Activated CD4-positive, alpha-beta memory T cell treated with anti-CD3 and anti-CD28 coated beads, Interleukin-2, amount 10 ng/mL, durations not matched to agents 7 days and 5 days (primary cell): ENCODE measurements at regions of chr5 and their contacts with region 1.

Region 1: DNA sequence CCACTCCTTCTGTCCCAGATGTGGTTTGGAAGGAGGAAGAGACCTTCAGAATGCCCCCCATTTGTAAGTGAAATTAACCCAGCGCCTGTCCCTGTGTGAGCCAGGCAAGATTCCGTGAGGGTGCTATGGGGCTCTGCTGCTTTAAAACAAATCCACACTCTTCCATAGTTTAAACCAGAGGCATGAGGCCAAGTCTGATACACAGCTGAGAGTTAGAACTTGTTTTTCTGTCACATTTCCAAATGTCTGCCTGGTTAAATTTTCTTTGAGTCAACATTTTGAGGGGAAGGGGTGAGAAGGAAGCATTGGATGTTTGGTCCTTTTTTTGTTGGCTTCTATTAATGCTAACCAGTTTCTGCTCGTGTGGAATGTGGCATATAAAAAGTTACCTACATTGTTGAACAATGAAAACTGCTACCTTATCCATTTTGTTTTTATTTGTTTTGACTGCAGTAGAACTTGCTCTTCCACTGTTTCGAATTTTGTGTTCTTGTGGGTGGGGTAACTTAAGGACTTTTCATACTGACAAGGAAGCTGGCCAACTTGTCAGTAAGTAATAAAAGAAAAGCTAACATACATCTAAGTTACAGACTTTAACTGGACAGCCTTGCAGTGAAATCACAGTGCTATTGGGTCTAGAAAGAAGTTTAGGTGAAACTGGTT is 12.9 kb downstream of the RGMB start:
- DNase-seq: no peak
- H3K4me3 Mint-ChIP-seq: no peak overlapping the region
- H3K27ac Mint-ChIP-seq: no peak overlapping the region
- H3K4me1 Mint-ChIP-seq: no peaks in the 10 kb centered on the region
- H3K27me3 Mint-ChIP-seq: no peaks in the 10 kb centered on the region

Region 2: DNA sequence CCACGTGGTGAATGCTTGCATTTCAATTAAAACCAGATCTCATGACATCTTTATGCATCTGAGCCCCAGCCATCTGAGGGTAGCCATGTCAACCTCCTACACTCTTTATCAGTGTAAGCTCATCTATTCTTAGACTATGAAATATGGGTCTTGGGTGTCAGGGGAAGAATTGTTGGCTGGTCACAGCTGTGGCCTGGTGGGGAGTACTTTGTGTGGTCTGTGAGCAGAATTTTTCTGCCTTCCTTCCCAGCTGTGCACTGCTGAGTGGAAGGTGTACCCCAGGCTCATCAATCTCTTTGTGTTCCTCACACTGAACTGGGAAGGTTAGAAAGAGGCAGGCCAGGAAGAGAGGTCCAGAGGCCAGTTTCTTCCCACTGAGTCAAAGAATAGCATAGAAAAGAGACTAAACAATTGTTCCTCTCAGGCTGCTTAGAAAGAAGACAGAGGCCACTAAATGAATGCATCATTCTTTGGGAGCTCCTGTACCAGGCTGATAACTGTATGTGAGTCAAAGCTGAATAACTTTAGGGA is 215.6 kb before region 1 on chr5:
- CTCF ChIA-PET with region 1: no interaction called
- POLR2A ChIA-PET with region 1: no interaction called
- DNase-seq: no peak
- H3K4me3 Mint-ChIP-seq: no peak overlapping the region
- H3K27ac Mint-ChIP-seq: no peak overlapping the region
- H3K4me1 Mint-ChIP-seq: no peaks in the 10 kb centered on the region
- H3K27me3 Mint-ChIP-seq: no peaks in the 10 kb centered on the region

Region 3: GRCh38 chr5:98796197-98796972 is 10.1 kb after region 1 on chr5:
- CTCF ChIA-PET with region 1: interaction called, 11 read pairs
- POLR2A ChIA-PET with region 1: no interaction called
- DNase-seq: peak; percentile 37
- H3K4me3 Mint-ChIP-seq: no peak overlapping the region
- H3K27ac Mint-ChIP-seq: no peak overlapping the region
- H3K4me1 Mint-ChIP-seq: no peaks in the 10 kb centered on the region
- H3K27me3 Mint-ChIP-seq: no peaks in the 10 kb centered on the region